Heart left ventricle (tissue), 16 donors: ENCODE measurements at regions of chr6 and their contacts with region 1.

Region 1: GRCh38 chr6:30565772-30566171 is 5.5 kb upstream of the ABCF1 start:
- DNase-seq: no peak
- ATAC-seq: no peak
- H3K4me3 ChIP-seq: no peak overlapping the region
- H3K27ac ChIP-seq: no peak overlapping the region
- H3K4me1 ChIP-seq: peaks cover 0 to 12% (median 9%) of the 10 kb centered on the region in 12 donors
- H3K27me3 ChIP-seq: no peaks in the 10 kb centered on the region
- CTCF ChIP-seq: no peak
- POLR2A ChIP-seq: no peak

Region 2: GRCh38 chr6:30515932-30516753 is 49.6 kb before region 1 on chr6:
- intact Hi-C with region 1: no loop called
- DNase-seq: peak; percentile 90 to 93 (median 91)
- ATAC-seq: peak; percentile 93 to 97 (median 97)
- H3K4me3 ChIP-seq: peak overlapping the region; percentile 6 to 59 (median 50)
- H3K27ac ChIP-seq: peak overlapping the region; percentile 83 to 99 (median 92)
- H3K4me1 ChIP-seq: peaks cover 0 to 29% (median 9%) of the 10 kb centered on the region in 12 donors
- H3K27me3 ChIP-seq: no peaks in the 10 kb centered on the region
- CTCF ChIP-seq: peak in 1 of 12 donors; percentile 5
- POLR2A ChIP-seq: peak in 1 of 2 donors; percentile 61

Region 3: DNA sequence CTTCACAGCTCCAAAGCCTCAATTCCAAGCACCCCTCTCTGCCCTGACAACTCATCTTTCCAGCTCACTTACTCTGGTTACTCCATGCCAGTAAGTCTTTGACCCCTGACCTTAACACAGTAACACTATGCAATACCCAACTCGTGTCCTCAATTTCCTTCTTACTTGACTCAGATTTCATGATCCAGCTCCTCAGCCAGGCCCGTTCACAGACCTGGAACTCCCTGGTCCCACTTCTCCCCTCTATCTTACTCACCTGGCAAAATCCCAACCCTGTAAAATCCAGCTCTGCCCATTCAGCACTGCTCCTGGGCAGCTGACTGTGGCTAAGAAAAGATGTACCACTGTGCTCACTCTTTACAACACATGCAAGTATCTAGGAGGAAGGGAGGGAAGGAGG is 17.4 kb before region 1 on chr6:
- intact Hi-C with region 1: loop called in 1 of 10 experiments (anchors 1 kb)
- DNase-seq: no peak
- ATAC-seq: no peak
- H3K4me3 ChIP-seq: no peak overlapping the region
- H3K27ac ChIP-seq: no peak overlapping the region
- H3K4me1 ChIP-seq: peaks cover 0 to 13% (median 5%) of the 10 kb centered on the region in 12 donors
- H3K27me3 ChIP-seq: no peaks in the 10 kb centered on the region
- CTCF ChIP-seq: no peak
- POLR2A ChIP-seq: no peak